ENCODE measurements at regions of chr1 and their contacts with region 1.

Region 1: DNA sequence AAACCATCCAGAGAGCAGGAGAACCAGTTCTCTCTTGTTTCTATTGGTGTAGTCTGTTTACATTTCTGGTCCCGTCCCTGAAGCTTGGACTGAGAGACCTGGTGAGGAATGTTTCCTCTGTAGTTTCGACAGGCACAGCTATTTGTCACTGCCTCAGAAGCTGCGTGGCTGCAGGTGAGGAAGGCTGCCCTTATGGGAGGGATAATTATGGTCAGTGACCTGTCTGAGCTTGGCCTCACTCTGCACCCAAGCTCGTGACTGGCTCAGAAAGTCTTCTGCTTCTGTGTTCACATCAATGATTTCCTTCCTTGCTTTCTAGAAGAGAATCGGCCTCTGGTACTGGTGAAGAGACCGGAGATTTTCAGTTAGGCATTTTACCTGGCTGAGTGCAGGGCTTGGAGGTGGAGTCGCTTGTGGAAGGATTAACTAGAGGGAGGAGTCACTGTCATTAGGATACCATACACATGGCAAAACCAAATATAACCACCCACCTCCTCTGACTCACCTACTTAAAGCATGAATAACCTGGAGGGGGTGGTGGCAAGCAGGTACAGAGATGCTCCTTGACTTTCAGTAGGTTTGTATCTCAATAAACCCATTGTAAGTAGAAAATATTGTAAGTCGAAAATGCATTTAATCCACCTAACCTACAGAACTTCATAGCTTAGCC is 19.9 kb upstream of the WDR26 start:
- DNase-seq: no peak
- H3K4me3 ChIP-seq: no peak overlapping the region
- H3K27ac ChIP-seq: no peak overlapping the region
- H3K4me1 ChIP-seq: peaks cover 0 to 12% (median 10%) of the 10 kb centered on the region in 4 donors
- H3K27me3 ChIP-seq: no peaks in the 10 kb centered on the region
- CTCF ChIP-seq: no peak

Region 2: DNA sequence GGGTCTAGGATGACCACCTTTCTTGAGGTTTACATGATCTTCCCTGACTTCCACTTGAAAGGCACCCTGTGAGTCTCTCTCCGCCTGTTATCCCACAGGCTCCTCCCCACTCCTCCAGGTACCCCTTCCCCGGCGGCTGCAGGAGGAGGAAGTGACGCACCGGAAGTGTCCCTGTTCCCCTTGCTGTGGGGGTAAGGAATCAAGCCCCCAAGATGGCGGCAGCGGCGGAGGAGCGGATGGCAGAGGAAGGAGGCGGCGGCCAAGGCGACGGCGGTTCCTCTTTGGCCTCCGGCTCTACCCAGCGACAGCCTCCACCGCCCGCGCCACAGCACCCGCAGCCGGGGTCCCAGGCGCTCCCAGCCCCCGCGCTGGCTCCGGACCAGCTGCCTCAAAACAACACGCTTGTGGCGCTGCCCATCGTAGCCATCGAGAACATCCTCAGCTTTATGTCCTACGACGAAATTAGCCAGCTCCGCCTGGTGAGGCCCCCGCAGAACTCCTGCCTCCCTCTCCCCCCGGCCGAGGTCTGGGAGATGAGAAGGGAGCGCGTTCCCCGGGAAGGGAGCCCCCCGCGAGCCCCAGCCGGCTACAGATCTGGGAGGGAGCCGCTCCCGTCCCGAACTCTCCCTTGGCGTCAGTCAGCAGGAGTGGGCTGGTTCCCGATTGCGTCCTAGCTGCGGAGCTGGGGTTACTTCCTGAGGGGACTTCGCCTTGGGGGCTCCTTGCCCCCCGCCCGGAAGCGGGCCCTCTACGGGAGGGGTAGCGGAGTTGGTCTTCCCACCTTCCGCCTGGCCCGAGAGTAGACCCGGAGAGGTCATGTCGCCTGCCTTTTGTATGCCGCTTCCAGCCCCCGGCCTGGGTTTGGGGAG is 340.4 kb before region 1 on chr1 and contains the start of gene FBXO28:
- intact Hi-C with region 1: loop called (anchors 5 kb)
- DNase-seq: peak; percentile 94 to 96
- H3K4me3 ChIP-seq: peak within 1 kb of the TSS; percentile 66 to 75
- H3K27ac ChIP-seq: peak within 1 kb of the TSS; percentile 92 to 94
- H3K4me1 ChIP-seq: peaks cover 0 to 29% (median 21%) of the 10 kb centered on the region in 4 donors
- H3K27me3 ChIP-seq: no peaks in the 10 kb centered on the region
- CTCF ChIP-seq: no peak

Region 3: GRCh38 chr1:224356685-224357625 is 97.6 kb before region 1 on chr1 and contains the start of gene CNIH4:
- intact Hi-C with region 1: loop called (anchors 10 kb)
- DNase-seq: peak; percentile 93 to 94
- H3K4me3 ChIP-seq: peak within 1 kb of the TSS; percentile 85 to 86
- H3K27ac ChIP-seq: peak within 1 kb of the TSS; percentile 94 to 95
- H3K4me1 ChIP-seq: peaks cover 0 to 33% (median 15%) of the 10 kb centered on the region in 4 donors
- H3K27me3 ChIP-seq: no peaks in the 10 kb centered on the region
- CTCF ChIP-seq: no peak

Region 4: DNA sequence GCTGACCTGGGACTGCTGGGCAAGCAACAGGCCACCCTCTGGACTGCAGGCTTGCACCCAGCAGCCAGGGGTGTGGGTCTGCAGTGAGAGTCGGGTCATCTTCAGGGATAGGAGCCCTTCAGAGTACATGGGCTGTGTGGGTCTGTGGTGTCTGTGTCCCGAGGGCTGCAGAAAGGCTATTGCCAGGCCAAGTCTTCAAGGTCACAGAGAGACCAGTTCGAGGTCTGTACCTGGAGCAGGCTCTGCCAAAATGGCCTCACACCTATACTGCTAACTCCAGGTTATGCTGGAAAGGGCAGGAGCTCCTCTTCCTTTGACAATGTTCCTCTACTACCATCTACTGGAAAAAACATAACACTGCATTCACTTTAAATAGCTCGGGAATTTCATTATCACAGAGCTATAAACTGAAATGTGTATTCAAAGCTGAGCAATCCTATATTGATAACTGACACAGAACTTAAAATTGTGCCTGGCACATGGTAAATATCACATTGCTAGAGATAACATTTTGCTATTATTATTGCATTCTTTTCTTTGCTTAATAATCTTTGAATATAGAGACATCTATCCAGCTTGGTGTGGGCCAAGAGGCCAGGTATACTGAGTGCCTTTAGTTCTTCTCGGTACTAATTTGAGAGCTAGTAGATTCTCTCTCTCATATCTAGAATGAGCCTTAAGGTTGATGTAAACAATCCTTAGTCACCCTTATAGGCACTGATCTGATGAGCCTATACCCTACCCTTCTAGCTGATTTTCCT is 468.1 kb after region 1 on chr1:
- intact Hi-C with region 1: no loop called
- DNase-seq: no peak
- H3K4me3 ChIP-seq: no peak overlapping the region
- H3K27ac ChIP-seq: no peak overlapping the region
- H3K4me1 ChIP-seq: no peaks in the 10 kb centered on the region
- H3K27me3 ChIP-seq: no peaks in the 10 kb centered on the region
- CTCF ChIP-seq: peak; percentile 38 to 44

Measured in tibial artery (tissue), 4 donors.